ENCODE measurements at regions of chr9 and their contacts with region 1.

Region 1: GRCh38 chr9:19456996-19457692 is 48.3 kb downstream of the ACER2 start:
- DNase-seq: peak; percentile 80
- H3K4me3 ChIP-seq: no peak overlapping the region
- H3K27ac ChIP-seq: no peak overlapping the region
- H3K4me1 ChIP-seq: peaks cover 6% of the 10 kb centered on the region
- H3K27me3 ChIP-seq: no peaks in the 10 kb centered on the region
- CTCF ChIP-seq: peak; percentile 88 to 93
- POLR2A ChIP-seq: no peak

Region 2: GRCh38 chr9:19028835-19029451 is 428.2 kb before region 1 on chr9:
- CTCF ChIA-PET with region 1: interaction called, 22 read pairs
- POLR2A ChIA-PET with region 1: no interaction called
- dilution Hi-C with region 1: no loop called
- intact Hi-C with region 1: no loop called
- DNase-seq: peak; percentile 59
- H3K4me3 ChIP-seq: no peak overlapping the region
- H3K27ac ChIP-seq: no peak overlapping the region
- H3K4me1 ChIP-seq: no peaks in the 10 kb centered on the region
- H3K27me3 ChIP-seq: no peaks in the 10 kb centered on the region
- CTCF ChIP-seq: peak; percentile 58 to 66
- POLR2A ChIP-seq: no peak

Region 3: DNA sequence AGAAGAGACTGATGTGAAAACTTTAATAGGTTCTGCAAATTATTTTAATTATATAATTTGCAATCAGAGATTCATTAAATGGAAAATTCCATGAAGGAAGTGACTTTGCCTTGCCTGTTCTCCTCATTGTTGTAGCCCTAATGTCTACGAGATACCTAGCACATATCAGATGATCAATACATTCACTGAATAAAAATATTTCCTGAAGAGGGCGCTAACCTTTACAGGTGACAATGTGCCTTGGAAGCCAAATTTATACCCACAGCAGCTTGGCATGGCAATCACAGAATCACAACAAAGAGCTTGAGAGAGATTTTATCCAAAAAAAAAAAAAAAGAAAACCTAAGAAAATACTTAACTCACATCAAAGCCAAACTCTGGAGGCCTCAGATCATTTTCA is 371.8 kb before region 1 on chr9:
- CTCF ChIA-PET with region 1: interaction called, 17 read pairs
- POLR2A ChIA-PET with region 1: no interaction called
- dilution Hi-C with region 1: no loop called
- intact Hi-C with region 1: loop called (anchors 1 kb)
- DNase-seq: peak; percentile 19
- H3K4me3 ChIP-seq: no peak overlapping the region
- H3K27ac ChIP-seq: no peak overlapping the region
- H3K4me1 ChIP-seq: no peaks in the 10 kb centered on the region
- H3K27me3 ChIP-seq: no peaks in the 10 kb centered on the region
- CTCF ChIP-seq: peak in 1 of 2 donors; percentile 13
- POLR2A ChIP-seq: no peak

Region 4: GRCh38 chr9:19379697-19380046 is 77.5 kb before region 1 on chr9:
- CTCF ChIA-PET with region 1: interaction called, 13 read pairs
- POLR2A ChIA-PET with region 1: no interaction called
- dilution Hi-C with region 1: no loop called
- intact Hi-C with region 1: loop called (anchors 1 kb)
- DNase-seq: peak; percentile 69
- H3K4me3 ChIP-seq: peak overlapping the region; percentile 84 to 94 (median 93)
- H3K27ac ChIP-seq: peak overlapping the region; percentile 62
- H3K4me1 ChIP-seq: peaks cover 37% of the 10 kb centered on the region
- H3K27me3 ChIP-seq: no peaks in the 10 kb centered on the region
- CTCF ChIP-seq: no peak
- POLR2A ChIP-seq: no peak